Sigmoid colon (tissue), 7 donors: ENCODE measurements at regions of chr17 and their contacts with region 1.

Region 1: GRCh38 chr17:2303204-2304188 is at the starts of genes SMG6 and SRR:
- DNase-seq: peak; percentile 95
- H3K4me3 ChIP-seq: peak within 1 kb of the TSS; percentile 87 to 93 (median 90)
- H3K27ac ChIP-seq: peak within 1 kb of the TSS; percentile 86 to 95 (median 94)
- H3K4me1 ChIP-seq: peaks cover 0 to 24% (median 19%) of the 10 kb centered on the region in 4 donors
- H3K27me3 ChIP-seq: no peaks in the 10 kb centered on the region
- CTCF ChIP-seq: no peak
- EP300 ChIP-seq: no peak
- POLR2A ChIP-seq: peak; percentile 31 to 57
- total RNA-seq, gene SMG6: 21.4 to 38.8 (median 25.7) TPM
- total RNA-seq, gene SRR: 10.0 to 27.8 (median 13.9) TPM

Region 2: GRCh38 chr17:2336215-2336851 is 32.8 kb after region 1 on chr17 and contains the start of gene TSR1:
- intact Hi-C with region 1: loop called (anchors 2 kb)
- DNase-seq: peak; percentile 95
- H3K4me3 ChIP-seq: peak within 1 kb of the TSS; percentile 66 to 100 (median 96)
- H3K27ac ChIP-seq: peak within 1 kb of the TSS; percentile 89 to 97 (median 93)
- H3K4me1 ChIP-seq: peaks cover 0 to 33% (median 20%) of the 10 kb centered on the region in 4 donors
- H3K27me3 ChIP-seq: no peaks in the 10 kb centered on the region
- CTCF ChIP-seq: no peak
- EP300 ChIP-seq: no peak
- POLR2A ChIP-seq: peak; percentile 85 to 94
- total RNA-seq, gene TSR1: 21.9 to 56.3 (median 38.0) TPM